ENCODE measurements at regions of chr3 and their contacts with region 1.

Region 1: DNA sequence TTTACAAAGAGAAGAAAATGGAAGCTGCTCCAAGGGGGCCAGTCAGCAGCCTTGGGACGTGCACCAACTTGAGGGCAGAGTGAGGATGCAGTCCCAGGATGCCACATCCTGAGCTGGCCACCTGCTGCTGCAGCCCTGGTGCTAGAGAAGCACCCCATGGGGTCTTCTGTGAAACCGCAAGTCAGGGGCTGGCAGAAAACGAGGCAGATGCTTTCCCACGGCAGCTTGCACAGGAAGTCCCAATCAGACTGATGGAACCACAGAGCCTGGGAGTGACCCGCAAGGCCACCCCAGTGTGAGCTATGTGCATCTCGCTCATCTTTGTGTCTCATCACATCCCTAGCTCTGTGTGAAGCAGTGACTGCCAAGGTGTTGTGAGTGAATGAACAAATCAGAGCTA is 76.5 kb downstream of the NUP210 start:
- DNase-seq: no peak
- H3K4me3 ChIP-seq: no peak overlapping the region
- H3K27ac ChIP-seq: no peak overlapping the region
- H3K4me1 ChIP-seq: peaks cover 17% of the 10 kb centered on the region
- CTCF ChIP-seq: no peak

Region 2: GRCh38 chr3:13332158-13332557 is 11.4 kb before region 1 on chr3:
- CTCF ChIA-PET with region 1: no interaction called
- POLR2A ChIA-PET with region 1: interaction called, 12 read pairs
- intact Hi-C with region 1: no loop called
- DNase-seq: peak; percentile 98
- H3K4me3 ChIP-seq: peak overlapping the region; percentile 50
- H3K27ac ChIP-seq: peak overlapping the region; percentile 95
- H3K4me1 ChIP-seq: peaks cover 91% of the 10 kb centered on the region
- CTCF ChIP-seq: no peak

Region 3: GRCh38 chr3:13648060-13649001 is 304.7 kb after region 1 on chr3:
- CTCF ChIA-PET with region 1: no interaction called
- POLR2A ChIA-PET with region 1: no interaction called
- intact Hi-C with region 1: no loop called
- DNase-seq: peak; percentile 73
- H3K4me3 ChIP-seq: no peak overlapping the region
- H3K27ac ChIP-seq: no peak overlapping the region
- H3K4me1 ChIP-seq: no peaks in the 10 kb centered on the region
- CTCF ChIP-seq: peak; percentile 95

Measured in OCI-LY7 (cell line).